WTC11 (cell line): ENCODE measurements at regions of chr7 and their contacts with region 1.

Region 1: DNA sequence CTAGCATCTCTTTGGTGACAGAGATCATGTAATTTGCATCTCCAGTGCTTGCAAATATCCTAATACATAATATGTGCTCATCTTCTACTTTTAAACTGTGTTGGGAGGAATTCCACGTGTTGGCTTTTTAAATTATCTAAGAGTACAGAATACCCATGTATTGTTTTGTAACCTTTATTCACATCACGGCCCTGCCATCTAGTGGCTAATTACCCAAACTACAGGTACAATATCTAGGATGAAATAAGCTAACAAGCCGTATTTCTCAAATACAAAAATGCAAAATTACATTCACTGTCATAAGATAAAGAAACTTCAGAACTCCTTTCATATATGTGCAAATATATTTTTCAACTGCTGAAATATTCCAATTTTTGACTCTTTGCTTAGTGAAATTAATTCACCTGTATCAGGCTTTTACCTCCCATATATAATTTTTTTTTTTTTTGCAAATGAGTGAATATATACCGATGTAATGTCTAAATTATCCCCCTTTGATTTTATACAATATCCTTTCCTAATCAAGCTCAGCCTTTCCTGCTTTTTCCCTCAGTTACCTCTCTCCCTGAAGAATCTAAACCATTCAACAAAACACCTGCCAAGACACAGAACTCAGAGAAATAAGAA is 30.3 kb upstream of the LSM8 start:
- DNase-seq: no peak
- ATAC-seq: no peak
- H3K4me3 Mint-ChIP-seq: no peak overlapping the region
- H3K27ac Mint-ChIP-seq: no peak overlapping the region
- H3K4me1 Mint-ChIP-seq: peaks cover 29% of the 10 kb centered on the region
- H3K27me3 Mint-ChIP-seq: no peaks in the 10 kb centered on the region; the same call in 1 of the 2 replicates
- CTCF ChIP-seq: peak; percentile 64; the same call in 1 of the 2 replicates

Region 2: GRCh38 chr7:117458977-117459583 is 694.6 kb before region 1 on chr7:
- CTCF ChIA-PET with region 1: interaction called, 13 read pairs
- POLR2A ChIA-PET with region 1: no interaction called
- DNase-seq: no peak
- ATAC-seq: no peak
- H3K4me3 Mint-ChIP-seq: no peak overlapping the region
- H3K27ac Mint-ChIP-seq: no peak overlapping the region
- H3K4me1 Mint-ChIP-seq: no peaks in the 10 kb centered on the region
- H3K27me3 Mint-ChIP-seq: no peaks in the 10 kb centered on the region
- CTCF ChIP-seq: peak; percentile 32; the same call in 1 of the 2 replicates

Region 3: DNA sequence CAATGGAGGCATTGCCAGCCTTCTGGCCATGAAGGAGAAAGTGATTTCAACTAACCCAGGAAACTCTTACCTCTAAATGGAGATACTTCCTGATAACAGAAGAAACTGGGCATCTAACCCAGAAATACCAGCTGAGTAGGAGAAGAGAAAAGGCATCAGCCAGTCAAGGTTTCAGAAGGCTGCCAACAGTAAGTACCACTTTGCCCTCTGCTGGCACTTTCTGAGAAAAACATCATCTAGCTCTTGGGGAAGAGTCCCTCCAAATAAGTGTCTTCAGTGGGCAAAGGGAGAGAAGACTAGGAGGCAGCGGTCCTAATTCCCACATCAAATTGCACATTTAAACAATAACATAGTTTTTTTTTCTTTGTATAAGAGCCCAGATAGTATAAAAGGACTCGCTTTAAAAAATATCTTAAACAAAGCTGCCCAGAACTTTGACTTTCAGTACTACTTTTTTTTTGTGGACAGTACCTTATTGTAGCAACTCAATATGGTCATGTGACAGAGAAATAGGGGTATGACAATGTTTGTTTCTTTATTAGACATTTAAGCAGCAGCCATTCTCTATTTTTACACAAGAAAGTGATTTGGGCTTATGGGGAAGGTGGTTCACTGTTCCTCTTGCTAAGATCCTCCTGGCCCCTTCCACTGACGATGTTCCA is 437.7 kb before region 1 on chr7:
- CTCF ChIA-PET with region 1: interaction called, 27 read pairs
- POLR2A ChIA-PET with region 1: no interaction called
- DNase-seq: peak; percentile 31
- ATAC-seq: peak; percentile 86
- H3K4me3 Mint-ChIP-seq: no peak overlapping the region
- H3K27ac Mint-ChIP-seq: no peak overlapping the region
- H3K4me1 Mint-ChIP-seq: no peaks in the 10 kb centered on the region
- H3K27me3 Mint-ChIP-seq: no peaks in the 10 kb centered on the region
- CTCF ChIP-seq: 0 out of 2 replicates have a peak, but pooled peaks have one; percentile 26

Region 4: DNA sequence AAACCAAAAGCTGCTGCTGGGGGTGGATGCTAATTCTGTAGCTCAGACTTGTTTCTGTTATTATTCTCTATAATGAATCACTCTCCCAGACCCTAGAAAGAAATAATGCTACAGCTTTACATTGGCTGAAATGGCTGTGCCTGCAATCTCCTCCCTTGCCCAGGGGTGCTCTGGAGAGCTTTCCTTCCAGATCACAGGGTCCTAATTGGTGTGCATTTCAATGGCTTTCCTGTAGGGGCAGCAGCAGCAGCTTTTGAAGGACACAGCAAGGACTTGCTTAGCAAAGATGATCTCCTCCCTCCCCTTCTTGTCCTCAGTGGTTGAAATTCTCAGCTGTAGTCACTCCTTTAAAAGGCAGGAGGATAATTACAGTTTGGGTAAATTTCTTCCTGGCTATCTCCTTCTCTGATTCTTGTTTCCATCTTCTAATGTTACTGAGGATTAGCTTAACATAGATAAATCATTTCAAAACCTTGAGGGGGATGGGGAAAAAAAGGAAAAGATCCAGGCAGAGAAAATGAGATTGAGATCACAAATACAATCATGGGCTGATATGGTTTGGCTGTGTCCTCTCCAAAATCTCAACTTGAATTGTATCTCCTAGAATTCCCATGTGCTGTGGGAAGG is 160.2 kb before region 1 on chr7:
- CTCF ChIA-PET with region 1: interaction called, 21 read pairs
- POLR2A ChIA-PET with region 1: no interaction called
- DNase-seq: peak; percentile 74
- ATAC-seq: peak; percentile 100
- H3K4me3 Mint-ChIP-seq: no peak overlapping the region; the same call in 1 of the 2 replicates
- H3K27ac Mint-ChIP-seq: no peak overlapping the region
- H3K4me1 Mint-ChIP-seq: peaks cover 21% of the 10 kb centered on the region
- H3K27me3 Mint-ChIP-seq: no peaks in the 10 kb centered on the region
- CTCF ChIP-seq: peak; percentile 56